Common myeloid progenitor, CD34-positive (primary cell): ENCODE measurements at regions of chr6 and their contacts with region 1.

Region 1: GRCh38 chr6:110039364-110039980 is 61.4 kb downstream of the GPR6 start:
- DNase-seq: peak; percentile 92 to 95 (median 94)
- H3K4me3 ChIP-seq: peak overlapping the region; percentile 36 to 88 (median 72)
- H3K27ac ChIP-seq: peak overlapping the region; percentile 59 to 74
- H3K4me1 ChIP-seq: peaks cover 0 to 38% (median 25%) of the 10 kb centered on the region in 4 experiments
- H3K27me3 ChIP-seq: no peaks in the 10 kb centered on the region

Region 2: GRCh38 chr6:109526905-109527628 is 512.4 kb before region 1 on chr6:
- CTCF ChIA-PET with region 1: interaction called, 28 read pairs
- POLR2A ChIA-PET with region 1: no interaction called
- DNase-seq: peak; percentile 74 to 84 (median 78)
- H3K4me3 ChIP-seq: no peak overlapping the region
- H3K27ac ChIP-seq: no peak overlapping the region
- H3K4me1 ChIP-seq: no peaks in the 10 kb centered on the region
- H3K27me3 ChIP-seq: no peaks in the 10 kb centered on the region

Region 3: DNA sequence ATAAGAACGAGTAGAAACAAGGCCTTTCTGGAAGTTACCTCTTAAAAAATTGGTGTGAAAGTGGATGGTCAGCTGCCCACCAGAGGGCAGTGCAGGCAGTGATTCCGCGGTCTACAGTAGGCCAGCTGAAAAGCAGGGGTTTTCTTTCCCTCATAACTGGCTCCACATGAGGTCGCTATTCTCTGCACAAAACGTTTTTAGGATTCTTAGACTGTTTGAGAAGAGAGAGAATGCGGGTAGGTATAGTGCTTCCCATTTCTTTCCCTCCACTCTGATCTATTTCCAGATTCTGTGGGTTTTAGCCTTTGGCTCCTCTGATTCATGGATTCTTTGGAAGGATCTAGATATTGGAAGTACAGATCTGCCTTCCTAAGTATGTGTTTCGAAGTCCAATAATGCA is 334.2 kb before region 1 on chr6:
- CTCF ChIA-PET with region 1: interaction called, 106 read pairs
- POLR2A ChIA-PET with region 1: interaction called, 4 read pairs
- DNase-seq: peak; percentile 91 to 95 (median 92)
- H3K4me3 ChIP-seq: no peak overlapping the region
- H3K27ac ChIP-seq: no peak overlapping the region
- H3K4me1 ChIP-seq: peaks cover 0 to 16% (median 13%) of the 10 kb centered on the region in 4 experiments
- H3K27me3 ChIP-seq: no peaks in the 10 kb centered on the region

Region 4: GRCh38 chr6:110029144-110029543 is 10.3 kb before region 1 on chr6:
- CTCF ChIA-PET with region 1: interaction called, 19 read pairs
- POLR2A ChIA-PET with region 1: no interaction called
- DNase-seq: no peak
- H3K4me3 ChIP-seq: no peak overlapping the region
- H3K27ac ChIP-seq: no peak overlapping the region
- H3K4me1 ChIP-seq: no peaks in the 10 kb centered on the region
- H3K27me3 ChIP-seq: no peaks in the 10 kb centered on the region

Region 5: GRCh38 chr6:110053395-110054240 is 14.1 kb after region 1 on chr6:
- CTCF ChIA-PET with region 1: interaction called, 19 read pairs
- POLR2A ChIA-PET with region 1: interaction called, 4 read pairs
- DNase-seq: peak; percentile 52 to 73 (median 69)
- H3K4me3 ChIP-seq: no peak overlapping the region
- H3K27ac ChIP-seq: no peak overlapping the region
- H3K4me1 ChIP-seq: peaks cover 0 to 8% (median 3%) of the 10 kb centered on the region in 4 experiments
- H3K27me3 ChIP-seq: no peaks in the 10 kb centered on the region